ENCODE measurements at regions of chr1 and their contacts with region 1.

Region 1: DNA sequence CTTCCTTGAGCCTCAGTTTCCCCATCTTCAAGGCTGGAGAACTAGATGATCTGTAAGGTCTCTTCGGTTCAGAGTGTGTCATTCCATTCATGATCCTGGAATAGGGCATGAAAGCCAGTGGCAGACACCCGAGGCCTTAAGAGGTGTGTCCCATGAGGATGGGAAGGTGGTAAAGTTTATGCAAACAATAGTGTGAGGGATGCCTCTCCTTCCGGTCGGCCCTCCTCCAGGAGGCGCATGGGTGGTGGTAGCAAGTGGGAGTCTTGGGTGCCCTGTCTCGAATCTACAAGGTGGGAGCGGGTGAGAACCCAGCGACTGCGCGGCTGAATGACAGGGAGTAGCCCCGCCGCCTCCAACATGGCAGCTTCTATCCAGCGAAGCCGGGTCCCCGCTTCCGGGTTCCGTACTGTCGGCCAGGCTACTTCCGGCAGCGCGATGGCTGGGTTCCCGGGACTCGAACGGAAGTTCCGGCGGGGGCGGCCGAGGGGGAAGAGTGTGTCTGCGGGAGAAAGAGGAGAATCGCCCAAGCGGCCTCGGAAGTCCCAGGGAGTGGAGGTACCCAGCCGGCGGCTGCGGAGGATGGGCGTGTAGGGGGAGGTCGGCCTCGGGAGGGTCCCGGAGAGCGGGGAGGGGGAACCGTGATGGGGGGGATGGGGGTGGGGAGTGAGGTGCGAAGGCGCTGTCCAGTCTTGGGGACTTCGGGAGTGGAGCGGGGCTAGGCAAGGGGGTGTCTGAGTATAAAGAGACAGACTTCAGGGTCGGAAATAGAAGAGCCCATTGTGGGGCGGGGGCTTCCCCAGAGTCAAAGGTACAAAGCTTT is at the start of gene LYPLA2:
- DNase-seq: peak; percentile 87
- ATAC-seq: peak; percentile 73
- H3K4me3 ChIP-seq: peak within 1 kb of the TSS; percentile 100
- H3K27ac ChIP-seq: peak within 1 kb of the TSS; percentile 82
- H3K4me1 ChIP-seq: peaks cover 24% of the 10 kb centered on the region
- H3K27me3 ChIP-seq: no peaks in the 10 kb centered on the region
- CTCF ChIP-seq: no peak
- total RNA-seq, gene LYPLA2: 120 and 142 TPM in 2 replicates

Region 2: GRCh38 chr1:23777979-23778814 is 12.7 kb before region 1 on chr1 and contains the start of gene PITHD1:
- CTCF ChIA-PET with region 1: no interaction called
- POLR2A ChIA-PET with region 1: interaction called, 16 read pairs
- intact Hi-C with region 1: no loop called
- DNase-seq: peak; percentile 86
- ATAC-seq: peak; percentile 74
- H3K4me3 ChIP-seq: peak within 1 kb of the TSS; percentile 85
- H3K27ac ChIP-seq: peak within 1 kb of the TSS; percentile 84
- H3K4me1 ChIP-seq: peaks cover 27% of the 10 kb centered on the region
- H3K27me3 ChIP-seq: no peaks in the 10 kb centered on the region
- CTCF ChIP-seq: no peak
- total RNA-seq, gene PITHD1: 107 and 115 TPM in 2 replicates

Region 3: GRCh38 chr1:23865543-23865930 is 74.6 kb after region 1 on chr1:
- CTCF ChIA-PET with region 1: no interaction called
- POLR2A ChIA-PET with region 1: no interaction called
- intact Hi-C with region 1: no loop called
- DNase-seq: peak; percentile 91
- ATAC-seq: peak; percentile 27
- H3K4me3 ChIP-seq: no peak overlapping the region
- H3K27ac ChIP-seq: peak overlapping the region; percentile 78
- H3K4me1 ChIP-seq: peaks cover 35% of the 10 kb centered on the region
- H3K27me3 ChIP-seq: no peaks in the 10 kb centered on the region
- CTCF ChIP-seq: no peak

Measured in PC-3 (cell line).